OCI-LY7 (cell line): ENCODE measurements at regions of chr9 and their contacts with region 1.

Region 1: DNA sequence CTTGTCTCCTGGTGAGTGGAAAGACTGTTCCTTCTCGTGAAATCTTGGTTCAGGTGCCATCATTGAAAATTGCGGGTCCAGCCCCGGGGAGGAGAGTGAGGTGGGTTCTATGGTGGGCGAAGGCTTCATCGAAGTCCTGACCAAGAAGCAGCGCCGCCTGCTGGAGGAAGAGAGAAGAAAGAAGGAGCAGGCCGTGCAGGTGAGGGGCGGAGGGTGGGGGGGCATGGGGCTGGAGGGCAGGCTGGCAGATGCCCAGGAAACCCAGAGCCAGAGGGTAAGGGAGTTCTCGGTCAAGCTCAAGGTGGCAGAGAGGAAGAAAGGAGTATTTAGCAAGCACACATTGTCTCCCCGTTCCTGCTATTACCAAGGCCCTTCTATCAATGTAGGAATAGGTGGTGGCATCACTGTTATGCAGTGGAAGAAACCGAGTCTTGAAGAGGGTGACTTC is 24.3 kb upstream of the POMT1 start:
- DNase-seq: peak; percentile 74
- H3K4me3 ChIP-seq: no peak overlapping the region
- H3K27ac ChIP-seq: no peak overlapping the region
- H3K4me1 ChIP-seq: no peaks in the 10 kb centered on the region
- CTCF ChIP-seq: peak; percentile 86

Region 2: GRCh38 chr9:131349881-131350563 is 128.4 kb before region 1 on chr9:
- CTCF ChIA-PET with region 1: no interaction called
- POLR2A ChIA-PET with region 1: no interaction called
- intact Hi-C with region 1: loop called (anchors 1 kb)
- DNase-seq: peak; percentile 87
- H3K4me3 ChIP-seq: no peak overlapping the region
- H3K27ac ChIP-seq: no peak overlapping the region
- H3K4me1 ChIP-seq: peaks cover 8% of the 10 kb centered on the region
- CTCF ChIP-seq: peak; percentile 85

Region 3: DNA sequence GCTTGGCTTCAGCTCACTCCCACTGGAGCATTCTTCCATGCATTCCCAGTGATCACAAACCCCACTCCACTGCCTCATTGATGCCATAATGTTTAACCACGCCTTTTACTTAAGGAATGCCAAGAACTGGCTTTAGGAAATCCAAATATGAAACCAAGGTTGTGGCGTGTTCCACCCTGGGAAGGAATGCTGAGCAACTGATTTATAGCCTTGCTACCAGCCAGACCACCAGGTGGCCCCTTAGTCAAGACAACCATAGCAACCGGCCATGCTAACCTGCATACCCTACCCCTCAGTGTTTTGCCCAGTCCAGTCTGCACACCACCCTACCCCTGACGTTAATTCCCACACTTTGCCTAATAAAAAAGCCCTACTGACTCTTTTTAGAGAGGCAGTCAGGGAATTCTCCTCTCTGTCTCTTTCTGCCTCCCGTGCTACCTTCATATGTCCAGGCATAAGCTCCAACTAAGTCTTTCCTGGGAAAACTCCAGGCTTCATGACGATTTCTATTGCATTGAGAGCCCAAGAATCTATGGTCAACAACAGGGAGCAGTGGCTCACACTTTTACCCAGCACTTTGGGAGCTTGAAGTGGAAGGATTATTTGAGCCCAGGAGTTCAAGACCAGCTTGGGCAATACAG is 111.6 kb before region 1 on chr9:
- CTCF ChIA-PET with region 1: no interaction called
- POLR2A ChIA-PET with region 1: interaction called, 7 read pairs
- intact Hi-C with region 1: loop called (anchors 2 kb)
- DNase-seq: peak; percentile 68
- H3K4me3 ChIP-seq: no peak overlapping the region
- H3K27ac ChIP-seq: no peak overlapping the region
- H3K4me1 ChIP-seq: peaks cover 3% of the 10 kb centered on the region
- CTCF ChIP-seq: peak; percentile 77

Region 4: GRCh38 chr9:131393622-131394463 is 84.6 kb before region 1 on chr9 and contains the start of gene PRRC2B:
- CTCF ChIA-PET with region 1: no interaction called
- POLR2A ChIA-PET with region 1: no interaction called
- intact Hi-C with region 1: loop called (anchors 2 kb)
- DNase-seq: peak; percentile 87
- H3K4me3 ChIP-seq: peak within 1 kb of the TSS; percentile 85
- H3K27ac ChIP-seq: peak within 1 kb of the TSS; percentile 89
- H3K4me1 ChIP-seq: peaks cover 45% of the 10 kb centered on the region
- CTCF ChIP-seq: peak; percentile 12; the same call in 1 of the 2 replicates
- total RNA-seq, gene PRRC2B: 84.2 and 89.4 TPM in 2 replicates

Region 5: GRCh38 chr9:131464354-131465000 is 14.0 kb before region 1 on chr9:
- CTCF ChIA-PET with region 1: no interaction called
- POLR2A ChIA-PET with region 1: no interaction called
- intact Hi-C with region 1: no loop called
- DNase-seq: no peak
- H3K4me3 ChIP-seq: no peak overlapping the region
- H3K27ac ChIP-seq: no peak overlapping the region
- H3K4me1 ChIP-seq: no peaks in the 10 kb centered on the region
- CTCF ChIP-seq: no peak

Region 6: DNA sequence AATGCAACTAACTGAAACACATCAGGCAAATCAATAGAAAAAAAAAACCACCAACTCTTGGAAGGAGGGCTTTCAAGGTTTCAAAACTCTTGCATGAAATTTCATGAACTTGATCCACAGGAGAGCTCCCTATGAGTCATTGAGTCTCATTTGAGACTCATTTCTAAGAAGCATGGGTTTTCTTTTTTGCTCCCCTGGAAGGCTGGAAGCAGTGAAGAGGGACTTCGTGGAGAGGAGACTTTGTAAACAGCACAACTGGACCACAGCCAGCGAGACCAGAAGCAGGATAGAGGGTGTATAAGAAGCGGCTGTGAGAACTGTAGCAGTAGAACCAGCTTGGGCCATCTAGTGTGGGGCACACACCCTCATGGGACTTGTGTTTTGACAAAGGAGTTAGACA is 302.6 kb after region 1 on chr9:
- CTCF ChIA-PET with region 1: no interaction called
- POLR2A ChIA-PET with region 1: no interaction called
- intact Hi-C with region 1: no loop called
- DNase-seq: no peak
- H3K4me3 ChIP-seq: no peak overlapping the region
- H3K27ac ChIP-seq: no peak overlapping the region
- H3K4me1 ChIP-seq: no peaks in the 10 kb centered on the region
- CTCF ChIP-seq: no peak